ENCODE measurements at regions of chr1 and their contacts with region 1.

Region 1: DNA sequence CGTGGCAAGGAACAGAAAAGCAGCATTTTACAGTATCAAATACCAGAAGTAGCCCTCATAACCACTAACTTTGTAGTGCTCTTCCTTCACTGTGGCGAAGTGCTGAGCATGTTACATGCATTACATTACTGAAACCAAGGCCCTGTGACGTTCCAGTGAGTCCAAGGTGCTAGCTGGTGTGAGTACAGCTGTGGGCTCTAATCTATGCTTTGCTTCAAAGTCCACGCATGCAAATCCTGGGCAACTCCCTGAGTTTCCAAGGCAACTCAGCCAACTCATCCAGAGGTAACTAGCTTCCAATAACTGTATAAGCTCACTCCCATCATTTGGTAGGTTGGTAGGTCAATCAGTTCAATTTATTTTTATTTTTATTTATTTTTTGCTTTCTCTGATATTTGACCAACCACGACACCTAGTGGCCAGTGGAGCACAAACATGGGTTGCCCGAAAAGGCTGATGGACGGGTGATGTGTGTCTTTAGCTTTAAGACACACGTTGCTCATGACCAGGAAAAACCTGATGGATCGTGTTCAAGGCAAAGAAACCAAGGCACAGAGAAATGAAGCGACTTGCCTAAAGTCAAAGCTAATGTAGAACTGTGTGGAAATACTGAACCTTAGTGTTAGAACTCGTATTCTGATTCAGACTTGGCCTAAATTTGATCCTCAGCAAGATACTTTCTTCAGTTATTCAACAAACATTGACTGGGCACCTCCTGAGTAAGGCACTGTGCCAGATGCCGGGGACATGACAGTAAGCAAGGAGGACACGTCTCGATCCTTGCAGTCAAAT is 73.0 kb downstream of the GNG12 start:
- DNase-seq: peak; percentile 56
- H3K4me3 Mint-ChIP-seq: no peak overlapping the region
- H3K27ac Mint-ChIP-seq: no peak overlapping the region
- H3K4me1 Mint-ChIP-seq: no peaks in the 10 kb centered on the region
- H3K27me3 Mint-ChIP-seq: peaks cover 29% of the 10 kb centered on the region

Region 2: DNA sequence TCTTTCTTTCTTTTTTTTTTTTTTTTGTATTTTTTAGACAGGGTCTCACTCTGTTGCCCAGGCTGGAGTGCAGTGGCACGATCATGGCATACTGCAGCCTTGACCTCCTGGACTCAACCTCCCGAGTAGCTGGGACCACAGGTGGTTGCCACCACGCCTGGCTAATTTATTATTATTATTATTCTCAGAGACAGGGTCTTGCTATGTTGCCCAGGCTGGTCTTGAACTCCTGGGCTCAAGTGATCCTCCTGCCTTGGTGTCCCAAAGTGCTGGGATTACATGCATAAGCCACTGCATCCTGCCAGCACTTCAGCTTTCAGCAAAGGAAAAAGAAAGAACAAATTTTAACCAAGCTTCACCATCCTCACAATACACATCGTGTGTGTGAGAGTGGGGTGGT is 232.1 kb before region 1 on chr1:
- CTCF ChIA-PET with region 1: interaction called, 61 read pairs
- POLR2A ChIA-PET with region 1: interaction called, 4 read pairs
- DNase-seq: no peak
- H3K4me3 Mint-ChIP-seq: no peak overlapping the region
- H3K27ac Mint-ChIP-seq: no peak overlapping the region
- H3K4me1 Mint-ChIP-seq: no peaks in the 10 kb centered on the region
- H3K27me3 Mint-ChIP-seq: peaks cover 12% of the 10 kb centered on the region

Region 3: DNA sequence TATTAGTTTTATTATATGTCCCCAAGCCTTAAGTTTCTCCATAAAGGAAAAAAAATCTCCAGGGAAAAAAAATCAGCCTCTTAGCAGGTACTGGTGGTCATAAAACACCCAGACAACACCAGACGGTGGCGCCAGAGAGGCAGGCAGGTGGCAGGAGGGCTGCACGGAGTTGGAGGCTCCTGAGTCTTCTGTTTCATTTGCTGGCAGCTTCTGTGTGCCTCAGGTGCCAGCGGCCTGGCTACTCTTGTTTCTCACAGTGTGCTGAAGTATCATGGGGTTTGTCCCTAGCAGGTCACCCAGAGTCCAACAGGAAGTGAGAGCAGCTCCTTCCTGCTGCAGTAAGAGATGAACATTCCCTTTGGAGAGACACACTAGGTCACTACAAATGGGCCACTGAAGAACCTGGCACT is 198.5 kb before region 1 on chr1:
- CTCF ChIA-PET with region 1: interaction called, 123 read pairs
- POLR2A ChIA-PET with region 1: interaction called, 4 read pairs
- DNase-seq: peak; percentile 85
- H3K4me3 Mint-ChIP-seq: no peak overlapping the region
- H3K27ac Mint-ChIP-seq: no peak overlapping the region
- H3K4me1 Mint-ChIP-seq: peaks cover 6% of the 10 kb centered on the region
- H3K27me3 Mint-ChIP-seq: peaks cover 2% of the 10 kb centered on the region

Region 4: DNA sequence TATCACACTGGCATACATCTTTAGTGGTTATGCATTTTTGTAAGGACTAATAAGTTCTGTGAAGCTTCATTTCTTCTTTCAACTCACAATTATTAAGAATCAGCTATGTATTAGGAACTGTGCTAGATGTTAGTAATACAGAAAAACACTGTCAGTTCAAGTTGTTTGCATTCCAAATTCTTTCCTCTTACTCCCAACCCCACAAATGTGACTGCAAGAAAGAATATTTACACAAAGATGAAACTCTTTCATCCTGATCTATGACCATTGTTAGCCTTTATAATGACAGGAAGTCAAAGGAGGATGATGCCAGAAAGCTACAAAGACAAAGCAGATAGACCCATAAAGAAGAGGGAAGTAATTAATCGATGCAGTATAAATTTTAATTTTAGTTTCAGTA is 96.2 kb before region 1 on chr1:
- CTCF ChIA-PET with region 1: no interaction called
- POLR2A ChIA-PET with region 1: no interaction called
- DNase-seq: no peak
- H3K4me3 Mint-ChIP-seq: no peak overlapping the region
- H3K27ac Mint-ChIP-seq: no peak overlapping the region
- H3K4me1 Mint-ChIP-seq: no peaks in the 10 kb centered on the region
- H3K27me3 Mint-ChIP-seq: peaks cover 36% of the 10 kb centered on the region

Region 5: GRCh38 chr1:67685067-67685557 is 75.1 kb before region 1 on chr1 and contains the start of gene GADD45A:
- CTCF ChIA-PET with region 1: interaction called, 21 read pairs
- POLR2A ChIA-PET with region 1: interaction called, 12 read pairs
- DNase-seq: peak; percentile 97
- H3K4me3 Mint-ChIP-seq: peak within 1 kb of the TSS; percentile 99
- H3K27ac Mint-ChIP-seq: peak within 1 kb of the TSS; percentile 98
- H3K4me1 Mint-ChIP-seq: peaks cover 46% of the 10 kb centered on the region
- H3K27me3 Mint-ChIP-seq: no peaks in the 10 kb centered on the region
- total RNA-seq, gene GADD45A: 29.5 to 30.7 TPM

Region 6: DNA sequence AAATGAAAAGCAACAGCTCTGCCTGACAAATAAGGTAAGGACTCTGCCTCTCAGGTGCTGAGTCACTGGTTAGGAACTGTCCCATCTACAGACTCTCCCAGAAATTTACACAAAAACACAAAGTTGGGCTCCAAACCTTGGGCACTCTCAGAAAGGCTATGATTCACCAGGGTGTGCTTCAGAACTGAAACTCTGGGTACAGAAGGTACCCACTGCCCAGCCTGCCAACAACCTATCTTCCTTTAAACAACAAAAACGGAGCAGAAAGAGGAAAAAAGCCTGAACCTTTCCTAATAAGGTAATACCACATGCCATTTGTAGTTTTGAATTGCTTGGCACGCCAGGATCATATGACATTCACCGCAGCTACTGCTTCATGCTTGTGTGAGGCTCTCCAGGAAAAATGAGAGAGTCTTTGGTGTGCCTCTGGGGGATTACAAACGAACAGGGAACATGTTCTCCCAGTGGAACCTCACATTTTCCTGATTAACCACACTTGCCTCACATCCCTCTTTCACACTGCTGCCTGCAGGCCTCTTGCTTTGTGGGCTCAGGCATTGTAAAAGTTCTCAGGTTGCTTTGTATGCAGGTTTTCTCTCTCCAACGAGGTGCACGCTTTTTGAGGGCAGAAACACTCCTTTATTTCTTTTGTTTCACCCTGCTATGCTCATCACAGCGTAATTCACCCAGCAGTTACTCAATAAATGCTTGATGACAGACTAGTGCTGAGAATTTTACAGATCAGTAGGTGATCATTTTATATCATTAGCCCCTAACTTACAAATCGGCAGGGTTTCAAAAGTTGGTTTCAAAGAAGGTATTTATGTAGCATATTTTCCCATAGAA is 10.2 kb before region 1 on chr1:
- CTCF ChIA-PET with region 1: interaction called, 14 read pairs
- POLR2A ChIA-PET with region 1: no interaction called
- DNase-seq: no peak
- H3K4me3 Mint-ChIP-seq: no peak overlapping the region
- H3K27ac Mint-ChIP-seq: no peak overlapping the region
- H3K4me1 Mint-ChIP-seq: peaks cover 30% of the 10 kb centered on the region
- H3K27me3 Mint-ChIP-seq: peaks cover 12% of the 10 kb centered on the region

Region 7: DNA sequence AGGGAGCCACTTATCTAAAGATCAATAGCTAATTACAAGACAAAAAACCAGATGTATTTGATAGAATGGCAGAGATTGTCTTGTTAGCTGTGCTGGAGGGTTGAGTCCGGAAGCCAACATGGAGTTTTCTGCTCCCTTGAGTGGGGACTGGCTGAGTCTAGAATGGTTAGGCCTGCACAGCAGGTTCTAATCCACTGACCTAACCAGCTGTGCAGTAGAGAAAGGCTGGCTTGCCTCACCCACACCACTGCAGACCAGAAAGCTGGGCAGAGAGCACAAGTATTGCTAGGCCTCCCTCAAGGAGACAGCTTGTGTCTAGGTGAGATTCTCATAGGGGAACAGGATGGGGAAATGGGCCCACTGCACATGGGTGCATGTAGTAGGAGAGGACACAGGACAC is 84.8 kb after region 1 on chr1:
- CTCF ChIA-PET with region 1: no interaction called
- POLR2A ChIA-PET with region 1: no interaction called
- DNase-seq: no peak
- H3K4me3 Mint-ChIP-seq: no peak overlapping the region
- H3K27ac Mint-ChIP-seq: no peak overlapping the region
- H3K4me1 Mint-ChIP-seq: no peaks in the 10 kb centered on the region
- H3K27me3 Mint-ChIP-seq: peaks cover 19% of the 10 kb centered on the region

Region 8: DNA sequence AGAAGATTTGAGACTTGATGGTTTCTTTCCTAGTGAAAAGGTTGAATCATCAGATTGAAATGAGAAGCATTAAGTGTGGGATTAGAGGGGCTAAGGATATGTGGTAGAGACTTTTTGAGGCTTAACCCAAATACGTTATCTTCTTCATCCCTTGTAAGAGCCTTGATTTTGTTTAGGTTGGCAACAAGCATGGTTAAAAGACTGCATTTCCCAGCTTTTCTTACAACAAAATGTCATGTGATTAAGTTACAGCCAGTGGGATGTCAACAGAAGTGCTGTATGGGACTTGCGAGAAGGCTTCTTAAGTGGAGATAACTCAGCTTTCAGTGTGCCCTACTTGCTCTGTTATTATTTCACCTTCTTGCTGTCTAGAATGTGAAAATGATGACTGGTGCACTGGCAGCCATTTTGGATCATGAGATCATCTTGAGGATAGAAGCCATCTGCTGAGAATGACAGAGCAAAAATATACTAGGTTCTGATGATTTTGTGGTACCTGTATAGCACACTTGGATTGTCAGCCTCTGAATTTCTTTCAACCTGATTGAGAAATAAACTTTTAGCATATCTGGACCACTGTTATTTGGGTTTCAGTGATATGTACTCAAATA is 114.4 kb after region 1 on chr1:
- CTCF ChIA-PET with region 1: no interaction called
- POLR2A ChIA-PET with region 1: no interaction called
- DNase-seq: no peak
- H3K4me3 Mint-ChIP-seq: no peak overlapping the region
- H3K27ac Mint-ChIP-seq: no peak overlapping the region
- H3K4me1 Mint-ChIP-seq: no peaks in the 10 kb centered on the region
- H3K27me3 Mint-ChIP-seq: peaks cover 2% of the 10 kb centered on the region

Measured in activated CD4-positive, alpha-beta memory T cell treated with anti-CD3 and anti-CD28 coated beads, Interleukin-2, amount 10 ng/mL, durations not matched to agents 7 days and 5 days (primary cell).